Common myeloid progenitor, CD34-positive (primary cell): ENCODE measurements at regions of chr12 and their contacts with region 1.

Region 1: DNA sequence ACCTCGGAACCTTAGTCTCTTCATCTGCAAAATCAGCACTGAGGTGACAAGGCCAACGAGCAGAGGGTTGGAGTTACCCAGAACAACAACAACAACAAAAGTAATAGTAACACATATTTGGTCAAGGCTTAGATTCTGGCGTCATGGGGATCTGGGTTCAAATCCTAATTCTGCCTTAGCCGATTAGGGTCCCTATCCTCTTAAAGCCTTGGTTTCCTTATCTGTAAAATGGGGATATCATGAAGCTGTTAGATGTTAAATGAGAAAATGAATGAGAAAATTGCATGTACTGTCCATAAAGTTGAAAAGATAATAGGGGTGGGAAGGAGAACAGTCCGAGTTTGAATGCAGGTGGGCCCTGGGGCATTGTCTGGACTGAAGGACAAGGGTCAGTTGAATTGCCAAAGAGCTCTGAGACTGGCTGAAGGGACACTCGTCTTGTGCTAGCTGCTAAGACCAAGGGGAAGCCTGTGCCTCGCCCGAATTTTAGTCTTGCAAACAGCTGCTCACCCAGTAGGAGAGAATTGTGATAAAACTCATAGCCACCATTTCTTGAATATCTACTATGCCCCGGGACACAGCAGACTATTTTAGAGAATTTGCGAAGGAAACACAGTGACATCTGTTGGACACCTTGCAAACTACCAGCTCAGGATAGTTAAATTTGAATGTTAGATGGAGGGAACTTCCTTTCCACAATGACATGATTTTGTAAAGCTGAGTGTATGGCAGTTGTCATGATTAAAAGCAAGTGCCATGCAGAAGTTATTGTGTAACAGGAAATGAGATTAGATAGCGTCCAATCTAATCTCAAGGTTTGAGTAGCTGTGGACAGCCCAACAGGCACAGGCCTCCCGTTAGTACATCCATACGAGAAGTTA is 6.8 kb upstream of the HNF1A start:
- DNase-seq: peak; percentile 81 to 91 (median 90)
- H3K4me3 ChIP-seq: peak overlapping the region in 2 of 7 experiments; percentile 25 to 31
- H3K27ac ChIP-seq: no peak overlapping the region
- H3K4me1 ChIP-seq: peaks cover 0 to 11% (median 2%) of the 10 kb centered on the region in 4 experiments
- H3K27me3 ChIP-seq: no peaks in the 10 kb centered on the region

Region 2: GRCh38 chr12:120453977-120454376 is 517.6 kb before region 1 on chr12:
- CTCF ChIA-PET with region 1: no interaction called
- POLR2A ChIA-PET with region 1: no interaction called
- DNase-seq: peak in 2 of 3 donors; percentile 60
- H3K4me3 ChIP-seq: no peak overlapping the region
- H3K27ac ChIP-seq: no peak overlapping the region
- H3K4me1 ChIP-seq: no peaks in the 10 kb centered on the region
- H3K27me3 ChIP-seq: no peaks in the 10 kb centered on the region

Region 3: DNA sequence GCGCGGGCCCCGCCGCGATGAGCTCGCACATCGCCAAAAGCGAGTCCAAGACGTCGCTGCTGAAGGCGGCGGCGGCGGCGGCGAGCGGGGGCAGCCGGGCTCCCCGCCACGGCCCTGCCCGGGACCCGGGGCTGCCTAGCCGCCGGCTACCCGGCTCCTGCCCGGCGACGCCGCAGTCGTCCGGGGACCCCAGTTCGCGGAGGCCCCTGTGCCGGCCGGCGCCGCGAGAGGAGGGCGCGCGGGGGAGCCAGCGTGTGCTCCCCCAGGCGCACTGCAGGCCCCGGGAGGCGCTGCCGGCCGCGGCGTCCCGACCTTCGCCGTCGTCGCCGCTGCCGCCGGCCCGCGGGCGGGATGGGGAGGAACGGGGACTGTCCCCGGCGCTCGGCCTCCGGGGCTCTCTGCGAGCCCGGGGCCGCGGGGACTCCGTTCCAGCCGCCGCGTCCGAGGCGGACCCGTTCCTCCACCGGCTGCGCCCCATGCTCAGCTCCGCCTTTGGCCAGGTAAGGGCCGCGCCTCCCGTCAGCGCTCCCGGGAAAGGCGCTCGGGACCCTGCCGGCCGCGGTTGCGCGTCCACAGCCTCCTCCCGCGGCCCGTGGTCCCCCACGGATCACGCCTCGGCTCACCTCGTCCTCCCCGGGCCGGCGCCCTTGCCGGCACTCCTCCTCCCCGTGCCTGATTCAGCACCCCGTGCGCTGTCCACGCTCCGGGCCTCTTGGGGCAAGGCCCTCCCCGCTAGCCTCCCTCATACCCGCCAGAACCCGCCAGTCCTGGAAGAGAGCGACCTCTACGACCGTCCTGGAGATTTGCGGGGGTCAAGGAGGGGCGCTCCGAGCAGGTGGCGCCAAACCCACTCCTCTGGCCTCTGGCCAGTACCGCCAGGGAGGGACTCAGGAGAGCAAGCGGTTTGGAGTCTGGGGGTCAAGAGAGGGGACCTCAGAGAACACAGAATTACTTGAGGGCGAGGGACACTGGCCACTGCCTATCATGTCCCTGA is 330.4 kb before region 1 on chr12:
- CTCF ChIA-PET with region 1: interaction called, 43 read pairs
- POLR2A ChIA-PET with region 1: no interaction called
- DNase-seq: peak; percentile 52 to 84 (median 77)
- H3K4me3 ChIP-seq: peak overlapping the region; percentile 15 to 69 (median 53)
- H3K27ac ChIP-seq: no peak overlapping the region
- H3K4me1 ChIP-seq: peaks cover 4 to 19% (median 16%) of the 10 kb centered on the region in 4 experiments
- H3K27me3 ChIP-seq: peaks cover 16 to 63% (median 34%) of the 10 kb centered on the region in 5 experiments

Region 4: DNA sequence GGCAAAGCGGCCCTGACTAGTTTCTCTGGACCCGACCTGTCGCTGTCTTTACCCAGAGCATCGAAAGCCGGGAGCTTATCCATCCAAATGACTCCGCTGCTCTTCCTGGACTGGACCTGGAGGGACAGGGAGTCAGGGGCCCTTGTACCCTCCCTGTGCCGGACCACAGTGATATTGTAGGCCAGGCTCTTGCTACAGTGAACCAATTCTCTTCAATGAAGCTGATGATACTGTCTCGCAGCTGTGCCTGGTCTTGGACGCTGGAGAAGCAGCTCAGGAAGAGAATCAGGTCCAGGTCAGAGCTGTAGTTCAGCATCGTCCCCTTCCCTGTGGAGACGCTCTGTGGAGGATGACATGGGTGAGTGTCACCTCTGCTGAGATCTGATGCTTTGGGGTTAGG is 82.2 kb after region 1 on chr12:
- CTCF ChIA-PET with region 1: no interaction called
- POLR2A ChIA-PET with region 1: no interaction called
- DNase-seq: no peak
- H3K4me3 ChIP-seq: no peak overlapping the region
- H3K27ac ChIP-seq: no peak overlapping the region
- H3K4me1 ChIP-seq: no peaks in the 10 kb centered on the region
- H3K27me3 ChIP-seq: no peaks in the 10 kb centered on the region